Psoas muscle (tissue), 8 donors: ENCODE measurements at regions of chr1 and their contacts with region 1.

Region 1: GRCh38 chr1:215076318-215076717 is 6.2 kb upstream of the KCNK2 start:
- DNase-seq: no peak
- ATAC-seq: no peak
- H3K4me3 ChIP-seq: no peak overlapping the region
- H3K27ac ChIP-seq: no peak overlapping the region
- H3K4me1 ChIP-seq: no peaks in the 10 kb centered on the region
- H3K27me3 ChIP-seq: peaks cover 0 to 3% (median 0%) of the 10 kb centered on the region in 3 donors
- CTCF ChIP-seq: peak; percentile 8

Region 2: DNA sequence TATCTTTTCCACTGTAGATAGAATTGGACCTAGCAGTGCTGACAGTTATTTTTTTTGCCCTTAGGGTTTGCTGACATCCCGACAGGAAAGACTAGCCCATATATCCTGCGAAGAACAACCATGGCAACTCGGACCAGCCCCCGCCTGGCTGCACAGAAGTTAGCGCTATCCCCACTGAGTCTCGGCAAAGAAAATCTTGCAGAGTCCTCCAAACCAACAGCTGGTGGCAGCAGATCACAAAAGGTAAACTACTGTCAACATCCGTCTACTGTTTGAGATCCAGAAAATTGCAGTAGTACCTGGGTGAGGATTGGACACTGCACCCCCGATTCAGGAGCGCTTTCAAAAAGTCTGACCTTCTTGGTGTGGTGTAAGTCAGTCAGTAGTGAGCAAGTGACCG is 417.5 kb before region 1 on chr1:
- intact Hi-C with region 1: loop called in 1 of 2 experiments (anchors 5 kb)
- DNase-seq: no peak
- ATAC-seq: no peak
- H3K4me3 ChIP-seq: no peak overlapping the region
- H3K27ac ChIP-seq: no peak overlapping the region
- H3K4me1 ChIP-seq: no peaks in the 10 kb centered on the region
- H3K27me3 ChIP-seq: no peaks in the 10 kb centered on the region
- CTCF ChIP-seq: no peak

Region 3: GRCh38 chr1:215095562-215095961 is 19.2 kb after region 1 on chr1:
- intact Hi-C with region 1: no loop called
- DNase-seq: no peak
- ATAC-seq: no peak
- H3K4me3 ChIP-seq: no peak overlapping the region
- H3K27ac ChIP-seq: no peak overlapping the region
- H3K4me1 ChIP-seq: no peaks in the 10 kb centered on the region
- H3K27me3 ChIP-seq: no peaks in the 10 kb centered on the region
- CTCF ChIP-seq: no peak